ENCODE measurements at regions of chr12 and their contacts with region 1.

Region 1: GRCh38 chr12:52121824-52122539 is 42.5 kb downstream of the SMIM41 start:
- DNase-seq: peak; percentile 36 to 56
- H3K4me3 ChIP-seq: no peak overlapping the region
- H3K27ac ChIP-seq: no peak overlapping the region
- H3K4me1 ChIP-seq: peaks cover 8% of the 10 kb centered on the region
- H3K27me3 ChIP-seq: no peaks in the 10 kb centered on the region
- CTCF ChIP-seq: peak; percentile 80

Region 2: DNA sequence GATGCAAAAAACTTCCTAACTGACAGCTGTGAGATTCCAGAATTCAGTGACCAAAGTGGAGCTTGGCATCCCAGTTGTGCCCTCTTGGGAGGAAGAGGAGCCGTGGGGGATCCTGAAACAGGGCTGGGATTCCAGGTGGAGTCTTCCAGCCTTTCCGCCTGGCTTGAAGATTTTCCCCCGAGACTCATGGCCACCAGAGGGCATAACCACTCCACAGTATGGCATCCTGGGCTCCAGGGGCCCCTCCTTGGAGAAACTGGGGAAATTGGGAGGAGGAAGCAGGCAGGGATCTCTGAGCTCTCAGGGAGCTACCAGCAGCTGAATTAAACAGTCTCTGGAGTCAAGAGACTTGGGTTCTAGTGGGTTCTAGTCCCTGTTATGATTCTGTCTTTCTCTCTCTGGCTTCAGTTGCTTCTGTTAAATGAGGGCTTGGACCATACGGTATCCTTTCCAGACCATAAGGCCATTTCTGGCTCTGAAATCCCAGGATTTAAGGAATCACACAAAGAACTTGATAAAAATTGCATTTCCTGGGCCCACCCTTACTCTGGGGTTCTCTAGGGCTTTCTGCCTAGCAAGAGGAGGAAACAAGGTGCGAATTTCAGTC is 117.8 kb before region 1 on chr12:
- CTCF ChIA-PET with region 1: interaction called, 3 read pairs
- POLR2A ChIA-PET with region 1: no interaction called
- intact Hi-C with region 1: loop called (anchors 5 kb)
- DNase-seq: peak in 1 of 2 experiments; percentile 69
- H3K4me3 ChIP-seq: no peak overlapping the region
- H3K27ac ChIP-seq: no peak overlapping the region
- H3K4me1 ChIP-seq: no peaks in the 10 kb centered on the region
- H3K27me3 ChIP-seq: no peaks in the 10 kb centered on the region
- CTCF ChIP-seq: peak; percentile 68

Region 3: GRCh38 chr12:52132754-52133161 is 10.8 kb after region 1 on chr12:
- CTCF ChIA-PET with region 1: no interaction called
- POLR2A ChIA-PET with region 1: no interaction called
- intact Hi-C with region 1: no loop called
- DNase-seq: peak in 1 of 2 experiments; percentile 79
- H3K4me3 ChIP-seq: no peak overlapping the region
- H3K27ac ChIP-seq: no peak overlapping the region
- H3K4me1 ChIP-seq: peaks cover 17% of the 10 kb centered on the region
- H3K27me3 ChIP-seq: no peaks in the 10 kb centered on the region
- CTCF ChIP-seq: no peak

Region 4: GRCh38 chr12:52175371-52176350 is 53.7 kb after region 1 on chr12:
- CTCF ChIA-PET with region 1: no interaction called
- POLR2A ChIA-PET with region 1: interaction called, 26 read pairs
- intact Hi-C with region 1: no loop called
- DNase-seq: no peak
- H3K4me3 ChIP-seq: no peak overlapping the region
- H3K27ac ChIP-seq: no peak overlapping the region
- H3K4me1 ChIP-seq: no peaks in the 10 kb centered on the region
- H3K27me3 ChIP-seq: no peaks in the 10 kb centered on the region
- CTCF ChIP-seq: no peak

Region 5: DNA sequence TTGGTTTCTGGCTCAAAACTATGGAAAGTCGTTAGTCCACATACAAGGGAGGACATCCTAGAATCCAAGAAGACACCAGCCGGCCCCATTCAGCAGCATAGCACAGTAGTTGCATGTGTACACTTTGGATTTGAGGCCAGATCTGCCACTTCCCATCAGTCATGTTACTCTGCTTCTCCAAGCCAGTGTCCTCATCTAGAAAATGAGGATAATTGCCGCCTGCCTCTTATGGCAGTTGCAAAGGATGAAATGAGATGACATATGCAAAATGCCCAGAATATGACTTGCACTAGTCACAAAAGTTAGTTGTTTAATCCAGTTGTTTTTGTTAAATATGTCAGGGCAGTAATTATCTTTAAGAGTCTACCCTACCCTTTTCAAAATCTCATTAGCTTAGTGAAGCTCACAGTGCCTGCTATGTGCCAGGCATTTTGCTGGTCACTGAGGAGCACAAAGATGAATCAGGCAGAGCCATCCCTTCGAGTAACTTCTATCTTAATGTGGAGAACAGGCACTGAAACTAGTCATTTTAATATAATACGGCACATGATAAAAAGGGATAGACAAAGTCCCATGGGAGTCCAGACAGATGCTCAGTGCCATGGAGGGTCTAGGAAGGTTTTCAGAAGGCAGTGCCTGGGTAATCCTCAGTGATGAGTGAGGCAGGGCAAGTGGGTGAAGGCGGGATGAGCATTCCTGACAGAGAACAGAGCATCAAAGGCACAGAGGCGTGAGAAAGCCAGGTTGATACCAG is 661.8 kb after region 1 on chr12:
- CTCF ChIA-PET with region 1: interaction called, 13 read pairs
- POLR2A ChIA-PET with region 1: no interaction called
- intact Hi-C with region 1: no loop called
- DNase-seq: no peak
- H3K4me3 ChIP-seq: no peak overlapping the region
- H3K27ac ChIP-seq: no peak overlapping the region
- H3K4me1 ChIP-seq: no peaks in the 10 kb centered on the region
- H3K27me3 ChIP-seq: no peaks in the 10 kb centered on the region; the same call in 1 of the 2 replicates
- CTCF ChIP-seq: no peak

Region 6: GRCh38 chr12:52851787-52852186 is 729.8 kb after region 1 on chr12:
- CTCF ChIA-PET with region 1: interaction called, 11 read pairs
- POLR2A ChIA-PET with region 1: no interaction called
- intact Hi-C with region 1: no loop called
- DNase-seq: no peak
- H3K4me3 ChIP-seq: no peak overlapping the region
- H3K27ac ChIP-seq: no peak overlapping the region
- H3K4me1 ChIP-seq: peaks cover 27% of the 10 kb centered on the region
- H3K27me3 ChIP-seq: no peaks in the 10 kb centered on the region
- CTCF ChIP-seq: no peak